G401 (cell line): ENCODE measurements at regions of chr19 and their contacts with region 1.

Region 1: DNA sequence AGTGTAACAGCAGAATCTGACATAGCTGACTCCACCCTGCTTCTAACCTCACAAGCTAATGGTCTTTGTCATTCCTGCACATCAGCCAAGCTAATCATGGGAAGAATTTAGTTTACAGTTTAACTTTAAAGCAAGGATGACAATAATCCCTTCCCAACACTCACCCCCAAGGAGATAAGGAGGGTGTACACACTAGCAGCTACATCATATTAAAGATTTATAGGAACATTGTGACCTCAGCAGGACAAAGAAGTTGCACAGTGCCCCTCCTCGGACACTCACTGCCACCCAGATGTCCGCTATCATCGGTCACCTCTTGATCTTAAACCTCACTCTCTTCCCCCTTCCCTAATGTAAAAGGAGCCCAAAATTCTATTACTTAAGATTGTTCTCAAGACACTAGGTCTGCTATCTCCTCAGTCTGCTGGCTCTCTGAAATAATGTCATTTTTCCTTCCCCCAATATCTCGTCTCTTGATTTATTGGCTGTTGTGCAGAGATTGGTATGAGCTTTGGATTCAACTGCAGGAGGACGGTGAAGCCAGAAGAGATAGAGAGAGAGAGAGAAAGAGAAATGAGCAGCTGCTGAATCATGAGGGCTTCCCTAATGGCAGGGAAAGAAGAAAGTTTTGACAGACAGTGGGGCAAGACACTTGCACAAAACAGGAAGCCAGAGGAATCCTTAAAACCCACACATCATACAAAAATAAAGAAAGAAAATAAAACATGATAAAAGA is 17.5 kb upstream of the FFAR2 start:
- DNase-seq: no peak

Region 2: DNA sequence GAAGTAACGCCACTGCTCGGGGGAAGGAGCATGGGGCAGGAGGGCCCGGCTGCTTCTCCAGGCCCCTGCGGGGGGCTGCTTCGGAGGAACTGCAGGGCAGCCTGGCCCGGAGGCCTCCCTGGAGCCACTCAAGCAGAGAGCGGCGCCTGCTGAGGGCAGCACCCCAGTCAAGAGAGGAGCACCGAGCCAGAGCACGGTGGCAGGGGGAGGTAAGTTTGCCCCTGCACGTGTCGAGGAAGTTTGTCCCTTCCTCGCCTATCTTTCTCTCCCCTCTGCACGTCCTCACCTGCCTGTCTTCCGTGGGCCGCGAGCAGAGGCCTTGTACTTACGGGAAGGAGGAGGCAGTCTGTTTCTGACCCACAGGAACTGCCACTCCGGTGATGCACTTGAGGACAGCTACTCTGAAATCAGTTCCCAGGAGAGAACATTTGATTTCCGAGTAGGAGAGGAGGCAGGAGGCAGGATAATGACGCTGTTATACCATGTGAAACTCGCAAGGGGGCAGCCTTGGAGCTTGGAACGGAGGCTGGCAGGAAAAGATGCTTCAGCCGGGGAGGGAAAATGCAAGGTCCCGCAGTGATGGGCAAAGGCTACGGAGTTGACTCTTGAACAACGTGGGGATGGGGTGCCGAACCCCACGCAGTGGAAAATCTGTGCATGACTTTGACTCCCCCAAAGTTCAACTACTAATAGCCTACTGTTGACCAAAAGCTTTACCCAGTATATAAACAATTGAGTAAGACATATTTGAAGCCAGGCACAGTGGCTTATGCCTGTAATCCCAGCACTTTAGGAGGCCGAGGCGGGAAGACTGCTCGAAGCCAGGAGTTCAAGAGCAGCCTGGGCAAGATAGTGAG is 77.9 kb before region 1 on chr19:
- in situ Hi-C with region 1: loop called (anchors 5 kb)
- DNase-seq: peak; percentile 64